HCT116 (cell line): ENCODE measurements at regions of chr11 and their contacts with region 1.

Region 1: DNA sequence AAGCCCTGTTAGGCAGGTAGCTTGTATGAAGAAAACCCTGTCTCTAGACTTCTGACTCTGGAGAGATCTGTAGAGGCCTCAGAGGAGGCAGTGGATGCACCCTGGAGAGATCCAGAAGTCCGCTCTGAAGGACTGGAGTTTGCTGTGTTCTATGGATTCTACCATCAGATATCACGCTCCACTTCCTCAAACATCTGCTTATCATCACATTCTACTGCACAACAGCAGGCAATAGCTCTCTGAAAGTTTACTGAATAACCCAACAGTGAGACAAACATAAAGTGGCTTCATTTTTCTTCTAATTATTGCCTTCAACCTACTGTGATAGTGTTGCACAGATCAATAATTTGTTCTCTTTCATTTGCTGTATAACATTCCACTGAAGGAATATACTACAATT is 59.0 kb upstream of the OR9Q1 start:
- DNase-seq: no peak
- ATAC-seq: no peak
- H3K4me3 ChIP-seq: no peak overlapping the region
- H3K27ac ChIP-seq: no peak overlapping the region
- H3K4me1 ChIP-seq: no peaks in the 10 kb centered on the region
- H3K27me3 ChIP-seq: peaks cover 30% of the 10 kb centered on the region; the same call in 1 of the 2 replicates
- CTCF ChIP-seq: no peak
- POLR2A ChIP-seq: no peak
- RAD21 ChIP-seq: no peak

Region 2: DNA sequence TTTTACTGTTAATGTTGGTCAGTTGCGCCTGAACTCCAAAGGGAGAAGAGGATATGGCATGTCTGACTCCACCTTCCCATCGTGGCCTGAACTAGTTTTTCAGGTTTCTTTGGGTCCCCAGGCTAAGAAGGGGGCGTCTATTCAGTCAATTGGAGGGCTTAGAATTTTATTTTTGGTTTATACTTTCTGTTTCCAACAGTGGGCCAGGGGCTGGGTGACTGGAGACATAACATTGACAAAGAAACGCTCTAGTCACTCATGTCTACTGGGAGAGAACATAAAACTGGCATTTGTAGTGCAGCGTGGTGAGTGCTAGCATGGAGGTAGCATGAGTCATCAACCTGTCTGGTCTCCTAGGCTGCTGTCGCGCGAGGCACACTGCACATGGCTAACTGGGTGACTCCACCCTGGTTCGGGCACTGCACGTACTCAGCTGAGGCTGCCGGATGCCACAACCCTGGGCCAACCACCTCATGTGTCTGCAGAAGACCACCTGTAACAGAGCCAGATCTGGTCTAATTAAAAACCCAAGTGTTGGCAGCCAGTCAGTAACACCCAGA is 61.0 kb before region 1 on chr11:
- CTCF ChIA-PET with region 1: no interaction called
- POLR2A ChIA-PET with region 1: no interaction called
- RAD21 ChIA-PET with region 1: no interaction called
- intact Hi-C with region 1: loop called (anchors 10 kb)
- DNase-seq: peak; percentile 74
- ATAC-seq: peak; percentile 98
- H3K4me3 ChIP-seq: peak overlapping the region; percentile 7 to 24; a peak in 2 of 4 replicates
- H3K27ac ChIP-seq: peak overlapping the region; percentile 38
- H3K4me1 ChIP-seq: peaks cover 27 to 41% of the 10 kb centered on the region in 2 experiments
- H3K27me3 ChIP-seq: no peaks in the 10 kb centered on the region
- CTCF ChIP-seq: no peak
- POLR2A ChIP-seq: no peak
- RAD21 ChIP-seq: 0 out of 2 replicates have a peak, but pooled peaks have one; percentile 26